B cell (primary cell): ENCODE measurements at regions of chr6 and their contacts with region 1.

Region 1: GRCh38 chr6:4402439-4402976 is 267.1 kb upstream of the ECI2 start:
- DNase-seq: no peak
- ATAC-seq: no peak
- H3K4me3 ChIP-seq: no peak overlapping the region
- H3K4me3 Mint-ChIP-seq: no peak overlapping the region
- H3K27ac ChIP-seq: no peak overlapping the region
- H3K27ac Mint-ChIP-seq: no peak overlapping the region
- H3K4me1 ChIP-seq: peaks cover 2 to 4% of the 10 kb centered on the region in 2 donors
- H3K4me1 Mint-ChIP-seq: peaks cover 15% of the 10 kb centered on the region
- H3K27me3 ChIP-seq: peaks cover 0 to 3% (median 0%) of the 10 kb centered on the region in 4 experiments
- H3K27me3 Mint-ChIP-seq: peaks cover 10% of the 10 kb centered on the region
- CTCF ChIP-seq: no peak

Region 2: DNA sequence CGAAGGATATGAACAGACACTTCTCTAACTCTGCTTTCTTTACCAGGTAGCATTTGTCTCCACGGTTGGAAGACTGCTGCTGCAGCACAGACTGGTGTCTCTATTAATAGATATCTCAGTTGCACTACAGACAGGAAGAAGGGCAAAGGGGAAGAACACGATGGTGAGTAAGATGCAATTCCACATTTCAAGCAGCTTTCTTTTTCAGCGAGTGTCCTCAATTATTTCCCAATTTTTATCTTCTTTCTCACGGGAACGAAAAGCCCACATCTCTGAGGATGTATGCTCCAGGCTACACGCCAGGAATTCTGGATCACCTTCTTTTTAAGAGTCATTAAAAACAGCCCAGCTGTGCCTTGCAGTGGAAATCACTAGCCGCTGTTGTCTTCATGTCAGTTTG is 44.5 kb after region 1 on chr6:
- CTCF ChIA-PET with region 1: no interaction called
- POLR2A ChIA-PET with region 1: no interaction called
- intact Hi-C with region 1: loop called (anchors 5 kb)
- DNase-seq: peak; percentile 32
- ATAC-seq: peak; percentile 72
- H3K4me3 ChIP-seq: no peak overlapping the region
- H3K4me3 Mint-ChIP-seq: peak overlapping the region; percentile 65
- H3K27ac ChIP-seq: peak overlapping the region in 1 of 2 donors; percentile 63
- H3K27ac Mint-ChIP-seq: peak overlapping the region; percentile 61
- H3K4me1 ChIP-seq: peaks cover 10 to 11% of the 10 kb centered on the region in 2 donors
- H3K4me1 Mint-ChIP-seq: peaks cover 17% of the 10 kb centered on the region
- H3K27me3 ChIP-seq: no peaks in the 10 kb centered on the region
- H3K27me3 Mint-ChIP-seq: peaks cover 4% of the 10 kb centered on the region
- CTCF ChIP-seq: no peak